ENCODE measurements at regions of chr1 and their contacts with region 1.

Region 1: DNA sequence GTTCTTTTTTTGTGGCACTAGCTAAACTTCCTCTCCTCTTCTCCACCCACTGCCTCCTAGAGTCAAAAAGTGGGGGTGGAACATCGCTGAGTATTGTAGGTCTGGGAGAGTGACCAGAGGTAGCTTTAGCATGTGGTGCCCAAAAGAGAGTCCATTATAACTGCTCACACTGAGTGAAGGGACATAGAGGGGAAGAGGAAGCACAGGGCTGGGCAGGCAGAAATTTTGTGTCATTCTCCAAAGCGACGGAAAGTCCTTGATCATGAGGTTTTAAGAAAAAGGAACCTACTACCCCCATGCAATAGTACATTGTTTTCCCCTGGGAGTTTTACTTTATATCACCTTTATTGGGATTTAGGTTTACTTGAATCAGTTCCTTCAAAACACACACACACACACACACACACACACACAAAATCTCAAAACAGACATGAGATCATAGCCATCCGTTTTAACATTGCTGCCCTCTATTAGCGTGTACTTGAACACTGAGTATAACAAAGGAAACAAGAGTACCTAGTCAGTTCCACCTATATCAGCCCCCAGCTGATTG is 4.1 kb downstream of the CD84 start:
- DNase-seq: no peak
- H3K4me3 Mint-ChIP-seq: peak overlapping the region; percentile 51
- H3K27ac Mint-ChIP-seq: peak overlapping the region; percentile 93
- H3K4me1 Mint-ChIP-seq: peaks cover 87% of the 10 kb centered on the region
- H3K27me3 Mint-ChIP-seq: no peaks in the 10 kb centered on the region

Region 2: DNA sequence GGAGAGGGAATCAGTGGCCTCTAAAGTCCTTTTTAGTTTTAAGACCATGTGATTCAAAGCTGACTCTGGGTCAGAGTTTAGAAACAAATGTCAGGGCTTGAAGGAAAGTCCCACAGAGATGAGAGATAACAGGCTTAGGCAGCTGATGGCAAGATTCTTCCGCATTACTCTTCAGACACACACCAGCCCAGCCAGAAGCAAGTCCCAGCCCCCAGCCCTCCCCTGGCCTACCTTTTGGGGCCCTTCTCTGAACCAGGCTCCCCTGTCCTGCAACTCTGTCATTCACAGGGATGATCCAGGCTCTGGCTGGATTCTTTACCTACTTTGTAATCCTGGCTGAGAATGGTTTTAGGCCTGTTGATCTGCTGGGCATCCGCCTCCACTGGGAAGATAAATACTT is 398.0 kb before region 1 on chr1:
- intact Hi-C with region 1: no loop called
- DNase-seq: no peak
- H3K4me3 Mint-ChIP-seq: no peak overlapping the region
- H3K27ac Mint-ChIP-seq: no peak overlapping the region
- H3K4me1 Mint-ChIP-seq: peaks cover 5% of the 10 kb centered on the region
- H3K27me3 Mint-ChIP-seq: peaks cover 24% of the 10 kb centered on the region

Region 3: GRCh38 chr1:160460683-160461287 is 114.4 kb before region 1 on chr1:
- intact Hi-C with region 1: loop called (anchors 2 kb)
- DNase-seq: no peak
- H3K4me3 Mint-ChIP-seq: peak overlapping the region; percentile 76
- H3K27ac Mint-ChIP-seq: peak overlapping the region; percentile 98
- H3K4me1 Mint-ChIP-seq: peaks cover 65% of the 10 kb centered on the region
- H3K27me3 Mint-ChIP-seq: no peaks in the 10 kb centered on the region

Region 4: DNA sequence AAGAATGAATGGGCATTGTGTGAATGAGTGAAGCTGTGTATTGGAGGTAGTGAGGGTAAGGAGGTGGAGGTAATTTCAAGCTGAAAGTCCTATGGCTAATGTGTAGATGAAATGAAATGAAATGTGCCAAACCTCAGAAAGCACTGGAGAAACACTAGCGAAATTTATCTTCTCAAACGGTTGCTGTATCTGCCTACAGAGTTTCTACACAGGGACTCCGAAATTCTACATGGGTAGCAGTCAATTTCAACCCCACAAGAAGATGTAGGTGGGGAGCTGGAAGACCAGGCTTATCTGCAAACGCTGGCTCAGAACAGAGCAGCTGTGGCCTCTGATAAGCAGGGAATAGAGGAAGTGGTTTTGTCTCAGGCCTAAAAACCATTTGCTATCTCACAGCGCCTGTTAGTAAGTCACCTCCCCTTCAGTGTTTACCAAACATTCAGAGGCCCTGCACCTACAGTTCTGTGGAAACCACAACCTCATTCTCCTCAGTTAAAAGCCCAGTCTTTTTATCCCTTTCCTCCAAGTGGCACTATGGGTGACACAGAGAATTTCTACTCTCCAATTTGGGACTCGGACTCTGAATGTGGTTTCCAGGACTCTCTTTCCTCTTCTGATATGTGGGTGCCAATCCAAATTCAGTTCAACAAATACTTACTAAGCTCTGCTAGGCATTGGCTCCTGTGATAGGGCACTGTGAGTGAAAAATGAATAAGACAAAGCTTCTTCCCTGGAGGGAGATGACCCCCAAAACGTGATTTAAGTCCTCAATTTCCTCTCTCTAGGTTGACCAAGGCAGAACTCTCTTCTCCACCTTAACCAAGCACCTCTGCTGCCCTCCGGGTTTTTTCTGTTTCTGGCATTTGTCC is 35.0 kb before region 1 on chr1:
- intact Hi-C with region 1: loop called (anchors 2 kb)
- DNase-seq: peak; percentile 66
- H3K4me3 Mint-ChIP-seq: peak overlapping the region; percentile 56
- H3K27ac Mint-ChIP-seq: peak overlapping the region; percentile 83
- H3K4me1 Mint-ChIP-seq: peaks cover 48% of the 10 kb centered on the region
- H3K27me3 Mint-ChIP-seq: no peaks in the 10 kb centered on the region

Region 5: GRCh38 chr1:160629286-160630210 is 54.4 kb after region 1 on chr1:
- intact Hi-C with region 1: loop called (anchors 2 kb)
- DNase-seq: peak; percentile 73
- H3K4me3 Mint-ChIP-seq: peak overlapping the region; percentile 20
- H3K27ac Mint-ChIP-seq: peak overlapping the region; percentile 100
- H3K4me1 Mint-ChIP-seq: peaks cover 95% of the 10 kb centered on the region
- H3K27me3 Mint-ChIP-seq: no peaks in the 10 kb centered on the region

Region 6: GRCh38 chr1:160675641-160676410 is 100.6 kb after region 1 on chr1:
- intact Hi-C with region 1: loop called (anchors 5 kb)
- DNase-seq: peak; percentile 63
- H3K4me3 Mint-ChIP-seq: peak overlapping the region; percentile 41
- H3K27ac Mint-ChIP-seq: peak overlapping the region; percentile 68
- H3K4me1 Mint-ChIP-seq: peaks cover 28% of the 10 kb centered on the region
- H3K27me3 Mint-ChIP-seq: no peaks in the 10 kb centered on the region

Measured in activated T-helper 2 cell treated with anti-CD3 and anti-CD28 coated beads, Interferon-gamma antibody, Interleukin-2, Interleukin-4, amounts not matched to agents 10 μg/mL and 5 μg/mL and 100 μg/mL, durations not matched to agents 14 hours and 24 hours and 36 hours (primary cell).